GM10248 (cell line): ENCODE measurements at regions of chr9 and their contacts with region 1.

Region 1: GRCh38 chr9:125631391-125632085 is 75.5 kb downstream of the MAPKAP1 start:
- DNase-seq: peak; percentile 57
- CTCF ChIP-seq: peak; percentile 49

Region 2: GRCh38 chr9:125620216-125620615 is 11.3 kb before region 1 on chr9:
- CTCF ChIA-PET with region 1: interaction called, 13 read pairs
- POLR2A ChIA-PET with region 1: no interaction called
- DNase-seq: no peak
- CTCF ChIP-seq: no peak

Region 3: GRCh38 chr9:125646621-125647100 is 15.1 kb after region 1 on chr9:
- CTCF ChIA-PET with region 1: interaction called, 20 read pairs
- POLR2A ChIA-PET with region 1: interaction called, 4 read pairs
- DNase-seq: no peak
- CTCF ChIP-seq: no peak